ENCODE measurements at regions of chr17 and their contacts with region 1.

Region 1: DNA sequence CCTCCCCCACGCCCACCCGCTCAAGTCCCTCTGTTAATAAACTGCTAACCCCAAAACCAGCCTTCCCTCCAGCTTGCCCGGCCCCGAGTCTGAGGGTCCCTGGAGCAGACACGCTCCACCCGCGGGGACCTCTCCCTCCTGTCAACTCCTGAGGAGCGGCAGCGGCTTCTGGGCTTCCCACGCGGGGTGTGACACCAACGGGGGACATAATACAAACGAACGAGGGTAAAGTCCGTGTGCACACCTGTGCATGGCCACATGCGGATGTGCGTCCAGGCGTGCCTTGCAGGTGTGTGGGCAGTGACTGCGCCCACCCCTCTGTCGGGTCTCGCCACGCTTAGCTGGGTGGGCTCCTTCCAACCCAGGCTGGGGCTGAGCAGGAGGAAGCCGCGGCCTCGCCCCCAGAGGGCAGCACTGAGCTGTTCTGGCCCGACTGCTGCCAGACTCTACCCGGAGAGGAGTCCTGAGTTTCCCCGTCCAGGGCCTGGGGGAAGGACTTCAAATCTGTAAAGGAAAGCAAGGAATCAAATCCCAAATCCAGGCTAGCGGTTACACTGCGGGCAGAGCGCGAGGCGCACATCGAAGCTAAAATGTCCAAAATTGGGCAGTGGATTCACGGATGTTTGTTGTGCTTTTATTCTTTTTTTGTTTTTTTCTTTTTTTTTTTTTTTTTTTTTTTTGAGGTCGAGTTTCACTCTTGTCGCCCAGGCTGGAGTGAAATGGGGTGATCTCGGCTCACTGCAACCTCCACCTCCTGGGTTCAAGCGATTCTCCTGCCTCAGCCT is 24.2 kb upstream of the KRT17 start:
- DNase-seq: peak; percentile 93
- H3K4me3 ChIP-seq: peak overlapping the region in 3 of 4 donors; percentile 26 to 42 (median 35)
- H3K27ac ChIP-seq: peak overlapping the region; percentile 70 to 95 (median 80)
- H3K4me1 ChIP-seq: peaks cover 25 to 51% (median 45%) of the 10 kb centered on the region in 4 donors
- H3K27me3 ChIP-seq: no peaks in the 10 kb centered on the region
- CTCF ChIP-seq: peak; percentile 93 to 99 (median 96)
- EP300 ChIP-seq: no peak
- POLR2A ChIP-seq: peak; percentile 67

Region 2: GRCh38 chr17:39763046-39763820 is 1885.4 kb before region 1 on chr17:
- in situ Hi-C with region 1: no loop called
- intact Hi-C with region 1: no loop called
- DNase-seq: no peak
- H3K4me3 ChIP-seq: no peak overlapping the region
- H3K27ac ChIP-seq: no peak overlapping the region
- H3K4me1 ChIP-seq: no peaks in the 10 kb centered on the region
- H3K27me3 ChIP-seq: peaks cover 17% of the 10 kb centered on the region
- CTCF ChIP-seq: no peak
- EP300 ChIP-seq: no peak
- POLR2A ChIP-seq: no peak

Region 3: GRCh38 chr17:40909351-40909750 is 739.3 kb before region 1 on chr17:
- in situ Hi-C with region 1: loop called in 2 of 4 experiments (anchors 10 to 25 kb)
- intact Hi-C with region 1: no loop called
- DNase-seq: peak; percentile 86
- H3K4me3 ChIP-seq: no peak overlapping the region
- H3K27ac ChIP-seq: peak overlapping the region; percentile 21 to 49 (median 37)
- H3K4me1 ChIP-seq: peaks cover 9 to 24% (median 9%) of the 10 kb centered on the region in 4 donors
- H3K27me3 ChIP-seq: no peaks in the 10 kb centered on the region
- CTCF ChIP-seq: peak; percentile 61 to 91 (median 75)
- EP300 ChIP-seq: no peak
- POLR2A ChIP-seq: no peak

Region 4: DNA sequence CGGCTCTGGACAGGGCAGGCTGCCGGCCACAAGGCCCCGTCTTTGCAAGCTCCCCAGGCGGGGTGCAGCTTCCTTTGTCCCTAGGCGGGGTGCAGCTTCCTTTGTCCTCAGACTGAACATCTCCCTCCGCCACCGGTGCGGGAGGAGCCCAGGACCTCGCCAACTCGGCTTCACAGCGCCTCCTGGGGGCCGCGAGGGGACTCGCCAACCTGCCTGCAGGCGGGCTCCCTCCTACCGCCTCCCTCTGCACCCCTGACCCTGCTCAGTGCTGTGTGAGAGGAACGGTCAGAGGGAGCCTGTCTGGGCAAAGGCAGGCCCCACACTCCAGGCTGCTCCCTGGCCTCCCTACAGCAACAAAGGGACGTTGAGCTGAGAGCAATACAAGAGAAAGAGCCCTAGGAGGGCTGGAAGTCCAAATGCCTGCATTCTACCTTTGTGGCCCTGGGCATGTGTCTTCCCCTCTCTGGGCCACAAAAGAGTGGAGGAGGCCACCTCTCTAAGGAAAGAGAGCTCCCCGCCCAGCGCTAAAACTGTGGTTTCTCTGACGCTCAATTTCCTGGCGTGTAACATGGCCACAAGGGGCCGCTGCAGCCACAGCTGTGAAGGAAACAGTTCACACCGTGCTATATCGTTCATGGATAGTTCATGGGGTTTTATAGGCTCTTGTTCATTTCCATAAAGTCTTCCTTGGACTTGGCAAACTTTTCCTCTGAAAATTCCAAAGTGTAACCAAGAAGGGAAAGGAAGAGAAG is 99.6 kb before region 1 on chr17:
- in situ Hi-C with region 1: loop called in 2 of 4 experiments (anchors 10 kb)
- intact Hi-C with region 1: loop called (anchors 5 kb)
- DNase-seq: peak; percentile 92
- H3K4me3 ChIP-seq: peak overlapping the region in 3 of 4 donors; percentile 12 to 37 (median 21)
- H3K27ac ChIP-seq: peak overlapping the region; percentile 80 to 88 (median 84)
- H3K4me1 ChIP-seq: peaks cover 6 to 48% (median 35%) of the 10 kb centered on the region in 4 donors
- H3K27me3 ChIP-seq: no peaks in the 10 kb centered on the region
- CTCF ChIP-seq: peak; percentile 73 to 98 (median 90)
- EP300 ChIP-seq: no peak
- POLR2A ChIP-seq: peak; percentile 16